ENCODE measurements at regions of chr15 and their contacts with region 1.

Region 1: GRCh38 chr15:41774062-41774881 is at the start of gene MAPKBP1:
- DNase-seq: peak; percentile 99
- ATAC-seq: peak; percentile 87
- H3K4me3 Mint-ChIP-seq: peak within 1 kb of the TSS; percentile 89
- H3K27ac Mint-ChIP-seq: peak within 1 kb of the TSS; percentile 93
- H3K4me1 Mint-ChIP-seq: peaks cover 47% of the 10 kb centered on the region
- H3K27me3 Mint-ChIP-seq: no peaks in the 10 kb centered on the region
- total RNA-seq, gene MAPKBP1: 32.0 to 36.6 TPM

Region 2: GRCh38 chr15:41806291-41807181 is 32.3 kb after region 1 on chr15:
- POLR2A ChIA-PET with region 1: interaction called, 54 read pairs
- DNase-seq: no peak
- ATAC-seq: no peak
- H3K4me3 Mint-ChIP-seq: no peak overlapping the region
- H3K27ac Mint-ChIP-seq: no peak overlapping the region
- H3K4me1 Mint-ChIP-seq: peaks cover 27% of the 10 kb centered on the region
- H3K27me3 Mint-ChIP-seq: no peaks in the 10 kb centered on the region

Region 3: DNA sequence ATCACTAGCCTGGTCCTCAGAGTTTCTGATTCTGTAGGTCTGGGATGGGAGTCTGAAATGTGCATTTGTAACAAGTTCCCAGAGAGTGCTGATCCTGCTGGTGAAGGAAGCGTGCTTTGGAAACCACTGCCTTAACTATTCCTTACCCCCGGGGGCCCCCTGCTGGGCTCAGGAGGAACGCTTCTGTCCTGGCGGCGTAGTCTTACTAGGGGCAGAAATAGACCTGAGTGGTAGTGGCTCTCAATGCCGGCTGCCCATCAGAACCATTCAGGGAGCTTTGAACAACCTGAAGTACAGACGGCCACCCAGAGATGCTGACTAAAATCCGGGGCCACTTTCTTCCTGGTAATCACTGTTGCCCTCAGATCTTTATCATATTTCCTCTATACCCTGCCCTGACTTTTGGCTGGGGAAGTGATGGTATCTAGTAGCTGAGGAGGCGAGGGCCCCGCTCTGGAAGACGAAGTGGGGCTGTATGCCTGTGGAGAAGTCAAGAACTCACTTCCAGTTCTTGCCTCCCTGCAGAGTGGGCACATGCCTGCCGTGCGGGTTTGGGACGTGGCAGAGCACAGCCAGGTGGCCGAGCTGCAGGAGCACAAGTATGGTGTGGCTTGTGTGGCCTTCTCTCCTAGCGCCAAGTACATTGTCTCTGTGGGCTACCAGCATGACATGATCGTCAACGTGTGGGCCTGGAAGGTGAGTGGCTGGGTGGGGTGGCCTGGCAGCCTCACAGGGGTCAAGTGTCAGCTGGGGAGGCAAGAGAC is 37.3 kb after region 1 on chr15:
- POLR2A ChIA-PET with region 1: interaction called, 54 read pairs
- DNase-seq: peak; percentile 80
- ATAC-seq: peak; percentile 81
- H3K4me3 Mint-ChIP-seq: peak overlapping the region; percentile 17
- H3K27ac Mint-ChIP-seq: peak overlapping the region; percentile 37
- H3K4me1 Mint-ChIP-seq: peaks cover 25% of the 10 kb centered on the region
- H3K27me3 Mint-ChIP-seq: no peaks in the 10 kb centered on the region

Region 4: DNA sequence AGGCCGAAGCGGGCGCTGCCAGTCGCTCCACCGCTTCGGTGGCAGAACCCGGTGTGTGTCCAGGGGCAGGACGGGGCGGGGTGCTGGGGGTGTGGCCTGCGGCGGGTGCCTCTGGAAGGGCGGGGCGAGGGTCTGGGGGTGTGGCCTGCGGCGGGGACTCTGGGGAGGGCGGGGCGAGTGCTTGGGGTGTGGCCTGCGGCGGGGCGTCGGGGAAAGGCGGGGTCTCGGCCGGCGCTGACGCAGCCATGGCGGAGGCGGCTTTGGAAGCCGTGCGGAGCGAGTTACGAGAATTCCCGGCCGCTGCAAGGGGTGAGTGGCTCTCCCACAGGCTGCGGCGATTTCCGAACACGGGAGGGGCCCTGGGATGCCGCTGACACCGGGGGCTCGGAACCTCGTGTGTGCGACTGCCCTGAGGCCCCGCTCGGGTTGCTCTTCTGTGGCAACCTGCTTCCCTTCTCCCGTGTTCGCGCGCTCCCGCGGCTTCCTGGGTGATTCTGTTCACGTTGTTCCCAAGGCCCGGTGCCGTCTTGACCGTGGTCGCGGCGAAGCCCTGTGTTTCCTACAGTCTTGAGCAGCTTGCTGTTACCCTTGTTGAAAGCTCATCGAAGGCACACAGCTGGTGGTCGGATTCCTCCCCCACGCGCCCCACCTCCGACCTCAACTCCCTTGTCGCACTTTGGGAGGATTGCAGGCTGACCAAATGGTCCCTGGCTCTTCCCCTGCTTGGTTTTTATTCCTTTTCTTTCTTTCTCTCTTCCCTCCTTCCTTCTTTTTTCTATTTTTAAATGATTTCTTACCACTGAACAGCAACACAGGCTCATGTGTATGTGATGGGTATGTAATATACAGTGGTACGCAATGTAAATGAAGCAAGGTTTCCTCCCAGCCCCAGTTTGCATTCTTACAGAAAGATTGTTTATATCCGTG is 53.9 kb after region 1 on chr15 and contains the start of gene JMJD7:
- POLR2A ChIA-PET with region 1: interaction called, 27 read pairs
- DNase-seq: peak; percentile 97
- ATAC-seq: peak; percentile 68
- H3K4me3 Mint-ChIP-seq: peak within 1 kb of the TSS; percentile 89
- H3K27ac Mint-ChIP-seq: peak within 1 kb of the TSS; percentile 84
- H3K4me1 Mint-ChIP-seq: peaks cover 36% of the 10 kb centered on the region
- H3K27me3 Mint-ChIP-seq: no peaks in the 10 kb centered on the region
- total RNA-seq, gene JMJD7: 33.8 to 54.3 TPM

Region 5: DNA sequence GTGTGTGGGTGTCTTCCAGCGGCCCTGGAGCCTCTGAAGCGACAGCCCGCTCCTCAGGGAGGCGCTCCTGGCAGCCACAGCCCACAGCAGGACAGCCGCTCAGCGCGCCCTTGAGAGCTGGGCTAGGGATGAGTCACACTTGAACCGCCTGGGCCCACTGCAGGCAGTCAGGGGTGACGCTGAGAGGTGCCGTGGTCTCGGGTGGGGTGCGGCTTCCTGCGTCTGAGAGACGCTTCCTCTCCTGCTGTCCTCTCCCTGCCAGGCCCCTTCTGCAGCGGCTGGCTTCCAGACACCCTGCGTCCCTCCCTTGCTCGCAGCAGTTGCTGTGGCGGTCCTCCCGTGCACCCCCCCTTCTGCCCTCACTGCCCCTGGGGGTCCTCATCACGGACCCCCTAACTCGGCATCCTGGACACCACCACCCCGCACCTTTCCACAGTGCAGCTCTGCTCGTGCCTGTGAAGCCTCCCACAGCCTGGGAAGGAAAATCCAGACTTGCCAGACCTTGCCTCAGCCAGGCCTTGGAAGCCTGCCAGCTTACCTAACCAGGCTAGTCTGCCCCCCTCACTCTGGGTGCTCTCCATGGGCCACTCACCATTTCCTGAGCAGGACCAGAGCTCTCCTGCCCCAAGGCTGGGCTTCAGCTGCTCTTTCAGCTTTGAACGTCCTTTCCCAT is 120.7 kb after region 1 on chr15:
- POLR2A ChIA-PET with region 1: interaction called, 15 read pairs
- DNase-seq: peak; percentile 84
- ATAC-seq: peak; percentile 100
- H3K4me3 Mint-ChIP-seq: peak overlapping the region; percentile 77
- H3K27ac Mint-ChIP-seq: peak overlapping the region; percentile 95
- H3K4me1 Mint-ChIP-seq: peaks cover 18% of the 10 kb centered on the region
- H3K27me3 Mint-ChIP-seq: no peaks in the 10 kb centered on the region

Region 6: DNA sequence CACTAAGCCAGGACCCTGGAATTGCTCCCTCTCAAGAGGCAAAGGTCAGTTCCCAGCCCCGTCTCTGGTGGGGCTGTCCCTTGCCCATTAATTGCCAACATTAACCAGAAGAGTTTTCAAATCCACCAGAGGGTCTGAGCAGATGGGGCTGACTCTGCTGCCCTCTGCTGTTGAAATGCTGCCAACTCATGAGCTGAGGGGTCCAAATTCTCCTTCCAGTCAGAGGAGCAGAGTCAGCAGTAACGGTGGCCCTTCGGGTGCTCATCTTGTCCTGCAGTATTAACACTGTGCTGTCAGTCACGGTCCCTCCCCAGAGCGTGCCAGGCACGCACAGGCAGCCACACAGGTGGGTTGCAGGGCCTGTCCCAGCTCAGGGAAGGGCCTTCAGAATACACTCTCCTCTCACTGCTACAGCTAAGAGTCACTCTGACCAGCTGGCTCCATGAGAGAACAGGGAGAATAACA is 130.3 kb after region 1 on chr15:
- POLR2A ChIA-PET with region 1: interaction called, 10 read pairs
- DNase-seq: peak; percentile 70
- ATAC-seq: peak; percentile 81
- H3K4me3 Mint-ChIP-seq: no peak overlapping the region
- H3K27ac Mint-ChIP-seq: peak overlapping the region; percentile 37
- H3K4me1 Mint-ChIP-seq: peaks cover 4% of the 10 kb centered on the region
- H3K27me3 Mint-ChIP-seq: no peaks in the 10 kb centered on the region

Region 7: DNA sequence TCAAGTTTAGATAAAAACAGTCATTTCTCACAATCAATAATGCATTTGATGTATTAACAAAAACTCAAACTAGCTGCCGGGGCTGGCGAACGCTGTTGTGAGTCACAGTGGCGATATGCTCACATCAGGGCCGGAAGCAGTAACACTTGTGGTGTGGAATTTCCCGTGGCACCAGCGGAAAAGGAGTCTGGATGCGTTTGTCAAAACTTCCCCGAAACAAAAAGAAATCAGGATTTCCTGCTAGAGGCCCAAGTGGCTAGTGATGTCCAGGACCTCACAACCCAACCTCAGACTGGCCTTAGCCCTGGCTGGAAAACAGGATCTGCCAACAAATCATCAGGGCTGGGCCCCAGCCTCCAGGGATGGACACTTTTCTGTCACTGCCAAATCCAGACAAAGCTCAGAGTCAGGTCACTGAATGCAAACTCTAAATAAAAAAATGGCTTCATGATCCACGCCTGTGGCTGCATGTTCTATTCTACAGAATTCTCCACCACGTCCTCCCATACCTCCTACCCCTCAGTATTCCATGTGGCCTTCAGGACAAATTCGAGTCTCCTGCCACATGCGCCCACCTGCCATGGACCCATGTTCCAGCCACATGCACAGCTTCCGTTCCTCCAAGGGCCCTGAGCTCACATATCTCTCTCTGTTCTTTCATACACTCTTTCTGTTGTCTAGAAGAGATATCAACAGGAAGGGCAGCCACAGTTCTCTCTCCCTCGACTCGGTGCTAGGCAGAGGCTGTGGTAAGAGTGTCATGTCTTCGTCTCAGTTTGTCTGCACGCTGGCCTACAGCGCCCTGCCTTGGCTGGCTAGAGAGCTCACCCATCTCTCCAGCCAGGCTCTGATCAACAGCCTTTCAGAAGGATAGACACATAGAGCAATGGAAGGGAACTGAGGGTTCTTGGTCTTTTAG is 162.6 kb after region 1 on chr15:
- POLR2A ChIA-PET with region 1: interaction called, 21 read pairs
- DNase-seq: peak; percentile 60
- ATAC-seq: peak; percentile 90
- H3K4me3 Mint-ChIP-seq: peak overlapping the region; percentile 83
- H3K27ac Mint-ChIP-seq: peak overlapping the region; percentile 99
- H3K4me1 Mint-ChIP-seq: peaks cover 41% of the 10 kb centered on the region
- H3K27me3 Mint-ChIP-seq: no peaks in the 10 kb centered on the region

Measured in activated naive CD8-positive, alpha-beta T cell treated with anti-CD3 and anti-CD28 coated beads, Interleukin-2, amount 10 ng/mL, durations not matched to agents 7 days and 5 days (primary cell).